BJ (cell line): ENCODE measurements at regions of chr1 and their contacts with region 1.

Region 1: DNA sequence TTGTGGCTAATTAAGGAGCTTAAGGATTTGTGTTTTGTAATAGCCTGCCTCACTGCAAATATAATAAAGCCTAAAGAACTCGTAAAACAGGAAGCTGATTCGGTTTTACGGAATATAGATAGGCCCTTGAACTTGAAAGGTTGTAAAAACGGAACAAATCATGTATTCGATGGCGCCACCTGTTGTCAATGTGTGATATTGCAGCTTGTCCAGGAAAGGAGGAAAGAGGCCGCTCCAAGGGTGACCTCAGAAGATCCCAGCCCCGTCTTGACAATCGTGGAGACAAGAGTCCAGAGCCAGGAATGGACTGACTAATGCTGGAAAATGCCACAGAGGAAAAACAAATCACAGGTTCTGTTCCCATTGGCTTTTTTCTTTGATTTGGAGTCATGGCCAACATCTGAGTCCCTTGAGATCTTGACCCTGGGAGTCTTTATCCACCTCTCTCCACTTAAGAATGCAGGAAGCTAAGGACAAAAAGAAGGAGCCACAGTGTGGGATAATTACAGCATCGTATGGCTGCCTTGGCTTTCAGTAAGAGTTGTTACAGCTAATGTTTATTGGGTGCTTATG is 7.0 kb upstream of the IGSF21 start:
- DNase-seq: peak; percentile 4
- H3K4me3 ChIP-seq: no peak overlapping the region
- H3K27me3 ChIP-seq: no peaks in the 10 kb centered on the region
- CTCF ChIP-seq: peak; percentile 75

Region 2: GRCh38 chr1:17653728-17654351 is 446.7 kb before region 1 on chr1:
- CTCF ChIA-PET with region 1: interaction called, 17 read pairs
- POLR2A ChIA-PET with region 1: no interaction called
- DNase-seq: no peak
- H3K4me3 ChIP-seq: no peak overlapping the region
- H3K27me3 ChIP-seq: no peaks in the 10 kb centered on the region
- CTCF ChIP-seq: peak; percentile 84

Region 3: GRCh38 chr1:17849216-17849615 is 251.4 kb before region 1 on chr1:
- CTCF ChIA-PET with region 1: interaction called, 19 read pairs
- POLR2A ChIA-PET with region 1: no interaction called
- DNase-seq: no peak
- H3K4me3 ChIP-seq: no peak overlapping the region
- H3K27me3 ChIP-seq: 0 out of 2 replicates have a peak, but pooled peaks cover 2% of the 10 kb centered on the region
- CTCF ChIP-seq: peak; percentile 69

Region 4: GRCh38 chr1:18072066-18072465 is 28.5 kb before region 1 on chr1:
- CTCF ChIA-PET with region 1: no interaction called
- POLR2A ChIA-PET with region 1: no interaction called
- DNase-seq: no peak
- H3K4me3 ChIP-seq: no peak overlapping the region
- H3K27me3 ChIP-seq: no peaks in the 10 kb centered on the region
- CTCF ChIP-seq: no peak

Region 5: GRCh38 chr1:18479484-18479883 is 378.9 kb after region 1 on chr1:
- CTCF ChIA-PET with region 1: no interaction called
- POLR2A ChIA-PET with region 1: no interaction called
- DNase-seq: no peak
- H3K4me3 ChIP-seq: no peak overlapping the region
- H3K27me3 ChIP-seq: no peaks in the 10 kb centered on the region
- CTCF ChIP-seq: no peak